Activated naive CD8-positive, alpha-beta T cell treated with anti-CD3 and anti-CD28 coated beads, Interleukin-2, amount 10 ng/mL, durations not matched to agents 7 days and 5 days (primary cell): ENCODE measurements at regions of chr1 and their contacts with region 1.

Region 1: GRCh38 chr1:28199328-28200233 is 23.1 kb upstream of the PTAFR start:
- DNase-seq: peak; percentile 86
- ATAC-seq: peak; percentile 87
- H3K4me3 Mint-ChIP-seq: peak overlapping the region; percentile 75
- H3K27ac Mint-ChIP-seq: peak overlapping the region; percentile 95
- H3K4me1 Mint-ChIP-seq: peaks cover 50% of the 10 kb centered on the region
- H3K27me3 Mint-ChIP-seq: no peaks in the 10 kb centered on the region

Region 2: GRCh38 chr1:28088168-28088961 is 111.2 kb before region 1 on chr1 and contains the start of gene EYA3:
- POLR2A ChIA-PET with region 1: interaction called, 12 read pairs
- DNase-seq: peak; percentile 100
- ATAC-seq: peak; percentile 89
- H3K4me3 Mint-ChIP-seq: peak within 1 kb of the TSS; percentile 92
- H3K27ac Mint-ChIP-seq: peak within 1 kb of the TSS; percentile 94
- H3K4me1 Mint-ChIP-seq: peaks cover 32% of the 10 kb centered on the region
- H3K27me3 Mint-ChIP-seq: peaks cover 6% of the 10 kb centered on the region
- total RNA-seq, gene EYA3: 27.0 to 27.3 TPM

Region 3: DNA sequence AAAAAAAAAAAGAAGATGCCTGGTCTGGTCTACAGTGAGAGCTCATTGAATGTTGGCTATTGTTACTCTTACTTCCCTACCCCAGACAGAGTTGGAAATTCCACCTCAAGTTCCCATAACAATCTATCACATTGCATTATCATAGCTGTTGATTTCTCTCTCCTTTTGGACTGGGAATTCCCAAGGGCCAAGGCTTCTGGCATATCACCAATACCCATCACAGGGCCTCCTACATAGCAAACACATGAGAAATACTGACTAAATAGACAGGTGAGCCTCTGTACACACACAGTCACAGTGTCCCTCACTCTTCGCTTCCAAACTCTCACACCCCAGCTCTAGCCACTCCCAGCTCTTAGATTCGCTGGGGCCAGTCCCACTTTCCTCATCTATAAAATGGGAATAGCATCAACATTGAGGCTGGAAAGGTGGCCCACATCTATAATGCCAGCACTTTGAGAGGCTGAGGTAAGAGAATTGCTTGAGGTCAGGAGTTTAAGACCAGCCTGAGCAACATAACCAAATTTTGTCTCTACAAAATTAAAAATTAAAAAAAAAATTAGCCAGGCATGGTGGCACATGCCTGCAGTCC is 29.5 kb before region 1 on chr1:
- POLR2A ChIA-PET with region 1: interaction called, 15 read pairs
- DNase-seq: no peak
- ATAC-seq: no peak
- H3K4me3 Mint-ChIP-seq: no peak overlapping the region
- H3K27ac Mint-ChIP-seq: peak overlapping the region; percentile 61
- H3K4me1 Mint-ChIP-seq: peaks cover 42% of the 10 kb centered on the region
- H3K27me3 Mint-ChIP-seq: peaks cover 25% of the 10 kb centered on the region

Region 4: DNA sequence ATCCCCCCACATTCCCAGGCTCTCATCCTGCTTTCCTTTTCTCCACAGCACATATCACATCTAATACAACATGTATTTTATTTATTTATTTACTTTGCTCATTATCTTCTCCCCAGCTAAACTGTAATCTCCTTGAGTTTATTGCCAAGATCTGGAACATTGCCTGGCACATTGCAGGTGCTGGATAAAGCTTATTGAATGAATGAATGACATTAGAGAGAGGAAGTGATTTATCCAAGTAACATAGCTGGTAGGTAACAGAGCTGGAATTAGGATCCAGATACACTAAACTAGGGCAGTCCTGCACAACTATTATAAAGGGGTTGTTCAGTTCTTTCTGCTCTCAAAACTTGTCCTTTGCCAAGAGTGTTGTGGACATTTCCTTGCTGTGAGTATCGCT is 14.5 kb before region 1 on chr1:
- POLR2A ChIA-PET with region 1: no interaction called
- DNase-seq: no peak
- ATAC-seq: no peak
- H3K4me3 Mint-ChIP-seq: no peak overlapping the region
- H3K27ac Mint-ChIP-seq: no peak overlapping the region
- H3K4me1 Mint-ChIP-seq: peaks cover 16% of the 10 kb centered on the region
- H3K27me3 Mint-ChIP-seq: peaks cover 28% of the 10 kb centered on the region